ENCODE measurements at regions of chrX and their contacts with region 1.

Region 1: DNA sequence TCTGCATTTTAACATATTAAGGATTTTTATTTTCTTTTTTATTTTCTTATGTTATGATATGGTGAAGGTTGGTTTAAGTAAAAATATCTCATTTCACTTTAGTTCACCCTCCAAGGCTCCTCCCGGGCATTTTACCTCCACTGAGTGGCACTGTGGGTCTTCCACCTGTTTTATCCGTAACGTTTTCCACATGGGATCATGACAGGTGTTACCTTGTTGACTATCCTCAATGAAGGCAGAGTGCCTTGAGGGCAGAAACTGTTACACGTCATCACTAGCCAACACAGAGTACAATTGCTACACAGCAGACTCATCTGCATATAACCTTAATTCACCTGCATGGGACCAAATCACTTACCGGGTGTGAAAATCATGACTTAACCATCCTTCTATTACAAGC is 105.8 kb downstream of the GEMIN8 start:
- DNase-seq: peak; percentile 95
- H3K4me3 Mint-ChIP-seq: no peak overlapping the region
- H3K27ac Mint-ChIP-seq: no peak overlapping the region
- H3K4me1 Mint-ChIP-seq: no peaks in the 10 kb centered on the region
- H3K27me3 Mint-ChIP-seq: peaks cover 48% of the 10 kb centered on the region
- CTCF ChIP-seq: peak; percentile 27

Region 2: GRCh38 chrX:13906093-13906492 is 17.8 kb before region 1 on chrX:
- CTCF ChIA-PET with region 1: interaction called, 11 read pairs
- POLR2A ChIA-PET with region 1: no interaction called
- intact Hi-C with region 1: no loop called
- DNase-seq: no peak
- H3K4me3 Mint-ChIP-seq: no peak overlapping the region
- H3K27ac Mint-ChIP-seq: no peak overlapping the region
- H3K4me1 Mint-ChIP-seq: peaks cover 17% of the 10 kb centered on the region
- H3K27me3 Mint-ChIP-seq: peaks cover 54% of the 10 kb centered on the region
- CTCF ChIP-seq: no peak

Region 3: DNA sequence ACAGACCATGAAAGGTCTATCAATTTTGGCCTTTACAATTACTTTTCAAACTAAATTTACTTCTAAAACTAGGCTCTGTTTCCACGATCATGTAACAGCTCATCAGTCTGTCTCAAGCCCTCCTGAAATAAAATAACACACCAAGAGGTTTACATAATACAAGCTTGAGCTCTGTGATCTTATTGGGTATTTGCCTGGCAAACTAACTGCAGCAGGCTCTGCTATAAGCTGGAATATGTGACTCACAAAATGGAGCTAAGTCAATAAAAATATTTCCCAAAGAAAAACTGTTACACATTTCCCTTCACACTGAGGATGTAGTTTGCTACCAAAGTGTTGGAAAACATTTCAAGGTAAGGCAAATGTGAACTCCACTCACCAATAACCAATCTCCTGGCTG is 12.3 kb before region 1 on chrX:
- CTCF ChIA-PET with region 1: interaction called, 14 read pairs
- POLR2A ChIA-PET with region 1: interaction called, 6 read pairs
- intact Hi-C with region 1: no loop called
- DNase-seq: peak; percentile 42
- H3K4me3 Mint-ChIP-seq: no peak overlapping the region
- H3K27ac Mint-ChIP-seq: no peak overlapping the region
- H3K4me1 Mint-ChIP-seq: peaks cover 4% of the 10 kb centered on the region
- H3K27me3 Mint-ChIP-seq: peaks cover 37% of the 10 kb centered on the region
- CTCF ChIP-seq: no peak

Region 4: DNA sequence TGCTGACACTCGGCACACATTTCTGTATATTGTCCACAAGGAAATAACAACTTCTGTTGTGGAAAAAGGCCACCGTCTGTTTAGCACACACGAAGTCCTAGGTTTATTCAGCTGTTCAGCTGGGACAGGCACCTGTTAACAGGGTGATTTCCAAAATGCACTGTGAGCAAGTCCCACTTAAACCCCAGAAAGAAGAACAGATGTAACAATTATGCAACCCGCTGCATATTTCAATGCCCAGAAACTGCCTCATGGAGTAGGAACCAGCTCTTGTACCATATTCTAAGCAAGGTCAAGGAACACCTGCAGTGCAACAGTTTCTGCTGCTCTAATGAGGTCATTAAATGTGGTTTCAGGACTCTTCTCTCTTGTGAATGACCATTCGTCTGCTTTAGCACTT is 28.7 kb after region 1 on chrX:
- CTCF ChIA-PET with region 1: no interaction called
- POLR2A ChIA-PET with region 1: no interaction called
- intact Hi-C with region 1: no loop called
- DNase-seq: no peak
- H3K4me3 Mint-ChIP-seq: no peak overlapping the region
- H3K27ac Mint-ChIP-seq: no peak overlapping the region
- H3K4me1 Mint-ChIP-seq: no peaks in the 10 kb centered on the region
- H3K27me3 Mint-ChIP-seq: peaks cover 71% of the 10 kb centered on the region
- CTCF ChIP-seq: no peak